ENCODE measurements at regions of chr14 and their contacts with region 1.

Region 1: GRCh38 chr14:73851644-73852382 is at the start of gene PTGR2:
- DNase-seq: peak; percentile 98
- ATAC-seq: peak; percentile 97
- H3K4me3 Mint-ChIP-seq: peak within 1 kb of the TSS; percentile 98
- H3K27ac Mint-ChIP-seq: peak within 1 kb of the TSS; percentile 100
- H3K4me1 Mint-ChIP-seq: peaks cover 22% of the 10 kb centered on the region
- H3K27me3 Mint-ChIP-seq: no peaks in the 10 kb centered on the region
- CTCF ChIP-seq: no peak
- total RNA-seq, gene PTGR2: 20.7 to 23.6 TPM (median 22.1 TPM) in 3 replicates

Region 2: GRCh38 chr14:73422515-73422914 is 429.3 kb before region 1 on chr14:
- CTCF ChIA-PET with region 1: no interaction called
- POLR2A ChIA-PET with region 1: no interaction called
- DNase-seq: no peak
- ATAC-seq: no peak; the same call in 1 of the 2 replicates
- H3K4me3 Mint-ChIP-seq: no peak overlapping the region
- H3K27ac Mint-ChIP-seq: peak overlapping the region; percentile 43
- H3K4me1 Mint-ChIP-seq: peaks cover 10% of the 10 kb centered on the region
- H3K27me3 Mint-ChIP-seq: no peaks in the 10 kb centered on the region
- CTCF ChIP-seq: no peak

Region 3: DNA sequence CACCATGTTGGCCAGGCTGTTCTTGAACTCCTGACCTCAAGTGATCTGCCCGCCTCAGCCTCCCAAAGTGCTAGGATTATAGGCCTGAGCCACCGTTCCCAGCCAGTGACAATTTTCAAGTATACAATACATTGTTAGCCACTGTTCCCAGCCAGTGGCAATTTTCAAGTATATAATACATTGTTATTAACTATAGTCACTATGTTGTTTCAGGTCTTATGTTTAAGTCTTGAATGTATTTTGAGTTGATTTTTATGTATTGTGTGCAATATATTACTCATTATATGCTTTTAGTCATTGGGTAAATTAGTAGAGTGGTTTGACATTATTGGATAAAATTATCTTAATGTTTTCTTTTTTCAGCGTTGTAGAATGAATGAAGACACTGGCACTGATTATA is 21.8 kb after region 1 on chr14:
- CTCF ChIA-PET with region 1: no interaction called
- POLR2A ChIA-PET with region 1: no interaction called
- DNase-seq: no peak
- ATAC-seq: no peak
- H3K4me3 Mint-ChIP-seq: no peak overlapping the region
- H3K27ac Mint-ChIP-seq: no peak overlapping the region
- H3K4me1 Mint-ChIP-seq: peaks cover 4% of the 10 kb centered on the region
- H3K27me3 Mint-ChIP-seq: no peaks in the 10 kb centered on the region
- CTCF ChIP-seq: no peak

Region 4: DNA sequence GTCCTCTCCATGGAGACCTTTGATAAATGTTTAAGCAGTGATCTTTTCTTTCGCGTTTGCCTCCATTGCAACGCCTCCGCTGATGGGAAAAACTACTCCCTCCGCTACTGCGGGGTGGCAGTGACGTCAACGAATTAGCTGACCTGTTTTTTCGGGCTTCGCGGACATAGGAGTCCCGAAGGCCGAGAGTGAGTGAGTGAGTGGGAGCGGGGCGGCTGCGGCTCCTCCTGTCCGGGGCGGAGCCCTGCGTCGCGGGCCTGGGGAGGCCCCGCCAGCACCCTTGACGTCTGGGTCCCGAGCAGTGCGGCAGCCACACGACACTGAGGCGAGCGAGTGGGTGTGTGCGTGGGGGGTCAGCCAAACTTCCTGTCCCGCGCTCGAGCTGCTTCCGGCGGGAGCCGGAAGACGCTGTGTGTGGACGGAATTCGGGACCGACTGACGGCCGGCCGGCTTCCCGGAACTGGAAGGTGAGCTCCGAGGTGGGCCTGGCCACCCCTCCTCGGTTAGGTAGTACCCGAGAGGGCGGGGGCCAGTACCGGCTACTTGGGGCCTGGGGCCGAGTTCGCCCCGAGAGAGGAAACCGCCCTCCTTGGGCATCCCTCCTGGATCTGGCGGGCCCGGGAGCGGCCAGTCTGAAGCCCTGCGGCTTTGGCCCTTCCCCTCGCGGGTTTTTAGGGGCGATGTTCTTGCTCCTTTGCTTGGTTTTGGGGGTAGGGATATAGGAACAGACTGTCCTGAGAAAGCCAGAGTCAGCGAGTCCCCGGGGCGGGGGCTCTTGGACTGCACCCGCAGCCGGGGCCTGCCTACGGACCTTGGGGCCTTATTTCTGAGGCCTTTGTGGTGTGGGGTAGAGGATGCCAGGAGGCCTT is 34.9 kb after region 1 on chr14 and contains the start of gene ZNF410:
- CTCF ChIA-PET with region 1: interaction called, 5 read pairs
- POLR2A ChIA-PET with region 1: interaction called, 10 read pairs
- DNase-seq: peak; percentile 82
- ATAC-seq: peak; percentile 93
- H3K4me3 Mint-ChIP-seq: peak within 1 kb of the TSS; percentile 88
- H3K27ac Mint-ChIP-seq: peak within 1 kb of the TSS; percentile 97
- H3K4me1 Mint-ChIP-seq: peaks cover 20% of the 10 kb centered on the region
- H3K27me3 Mint-ChIP-seq: no peaks in the 10 kb centered on the region
- CTCF ChIP-seq: no peak
- total RNA-seq, gene ZNF410: 19.3 to 21.0 TPM (median 20.5 TPM) in 3 replicates

Measured in WTC11 (cell line).